ENCODE measurements at regions of chr20 and their contacts with region 1.

Region 1: GRCh38 chr20:10427060-10427692 is 6.8 kb downstream of the MKKS start:
- DNase-seq: no peak
- ATAC-seq: peak; percentile 72; the same call in 1 of the 2 replicates
- H3K4me3 ChIP-seq: no peak overlapping the region
- H3K27ac ChIP-seq: no peak overlapping the region
- H3K4me1 ChIP-seq: 0 out of 2 replicates have a peak, but pooled peaks cover 4% of the 10 kb centered on the region
- H3K27me3 ChIP-seq: no peaks in the 10 kb centered on the region
- CTCF ChIP-seq: peak; percentile 84

Region 2: DNA sequence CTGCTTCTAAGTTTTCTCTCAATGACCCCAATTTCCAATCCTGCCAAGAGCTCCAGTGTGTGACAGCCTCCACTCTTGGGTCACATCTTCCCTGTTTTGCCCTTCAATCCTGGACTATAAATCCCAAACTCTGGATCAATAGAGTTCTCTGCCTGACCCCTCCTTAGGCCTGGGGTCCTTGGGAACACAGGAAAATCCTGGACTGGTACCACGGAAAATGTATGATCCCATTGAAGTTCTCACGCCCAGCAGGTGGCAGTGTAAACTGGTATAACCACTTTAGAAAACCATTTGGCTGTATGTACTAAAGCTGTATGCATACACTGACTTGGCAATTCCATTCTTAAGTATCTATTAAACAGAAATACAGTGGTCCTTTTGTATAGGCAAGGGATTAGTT is 110.6 kb before region 1 on chr20:
- CTCF ChIA-PET with region 1: no interaction called
- POLR2A ChIA-PET with region 1: no interaction called
- in situ Hi-C with region 1: no loop called
- intact Hi-C with region 1: loop called (anchors 5 kb)
- DNase-seq: peak; percentile 7
- ATAC-seq: no peak
- H3K4me3 ChIP-seq: no peak overlapping the region
- H3K27ac ChIP-seq: no peak overlapping the region
- H3K4me1 ChIP-seq: no peaks in the 10 kb centered on the region
- H3K27me3 ChIP-seq: no peaks in the 10 kb centered on the region
- CTCF ChIP-seq: peak; percentile 69

Region 3: DNA sequence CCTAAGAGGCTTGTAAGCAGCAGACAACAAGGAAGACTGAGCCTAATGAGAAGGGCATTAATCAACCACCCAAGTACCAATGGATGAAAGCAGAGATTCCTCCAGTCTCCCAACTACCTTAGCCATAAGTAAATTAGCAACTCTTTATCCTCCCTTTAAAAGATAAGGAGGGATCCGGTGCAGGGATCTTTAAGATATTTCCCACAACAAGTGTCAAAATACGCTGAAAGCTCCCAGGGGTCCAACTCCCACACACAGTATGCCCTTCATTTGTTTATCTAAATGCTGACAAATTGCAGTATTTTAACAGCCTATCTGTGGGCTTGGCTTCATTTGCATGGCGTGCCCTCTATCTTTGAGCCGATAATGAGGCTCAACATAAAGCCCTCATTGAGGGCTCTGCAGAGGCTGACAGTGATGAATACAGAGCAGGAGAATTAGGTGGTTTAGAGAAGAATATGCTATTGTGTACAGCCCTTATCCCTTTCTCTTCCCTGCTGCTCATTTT is 821.6 kb after region 1 on chr20:
- CTCF ChIA-PET with region 1: no interaction called
- POLR2A ChIA-PET with region 1: no interaction called
- in situ Hi-C with region 1: no loop called
- intact Hi-C with region 1: no loop called
- DNase-seq: no peak
- ATAC-seq: no peak
- H3K4me3 ChIP-seq: no peak overlapping the region
- H3K27ac ChIP-seq: no peak overlapping the region
- H3K4me1 ChIP-seq: no peaks in the 10 kb centered on the region
- H3K27me3 ChIP-seq: no peaks in the 10 kb centered on the region
- CTCF ChIP-seq: no peak

Measured in Panc1 (cell line).